ENCODE measurements at regions of chr15 and their contacts with region 1.

Region 1: GRCh38 chr15:41331833-41332787 is at the start of gene OIP5:
- DNase-seq: peak; percentile 99
- H3K4me3 Mint-ChIP-seq: peak within 1 kb of the TSS; percentile 95
- H3K27ac Mint-ChIP-seq: peak within 1 kb of the TSS; percentile 99
- H3K4me1 Mint-ChIP-seq: peaks cover 35% of the 10 kb centered on the region
- H3K27me3 Mint-ChIP-seq: no peaks in the 10 kb centered on the region
- total RNA-seq, gene OIP5: 15.2 to 15.4 TPM

Region 2: GRCh38 chr15:40952901-40953712 is 379.0 kb before region 1 on chr15 and contains the start of gene CHAC1:
- CTCF ChIA-PET with region 1: no interaction called
- POLR2A ChIA-PET with region 1: interaction called, 10 read pairs
- DNase-seq: peak; percentile 98
- H3K4me3 Mint-ChIP-seq: peak within 1 kb of the TSS; percentile 88
- H3K27ac Mint-ChIP-seq: peak within 1 kb of the TSS; percentile 87
- H3K4me1 Mint-ChIP-seq: peaks cover 46% of the 10 kb centered on the region
- H3K27me3 Mint-ChIP-seq: peaks cover 2% of the 10 kb centered on the region
- total RNA-seq, gene CHAC1: 20.3 to 22.0 TPM

Region 3: DNA sequence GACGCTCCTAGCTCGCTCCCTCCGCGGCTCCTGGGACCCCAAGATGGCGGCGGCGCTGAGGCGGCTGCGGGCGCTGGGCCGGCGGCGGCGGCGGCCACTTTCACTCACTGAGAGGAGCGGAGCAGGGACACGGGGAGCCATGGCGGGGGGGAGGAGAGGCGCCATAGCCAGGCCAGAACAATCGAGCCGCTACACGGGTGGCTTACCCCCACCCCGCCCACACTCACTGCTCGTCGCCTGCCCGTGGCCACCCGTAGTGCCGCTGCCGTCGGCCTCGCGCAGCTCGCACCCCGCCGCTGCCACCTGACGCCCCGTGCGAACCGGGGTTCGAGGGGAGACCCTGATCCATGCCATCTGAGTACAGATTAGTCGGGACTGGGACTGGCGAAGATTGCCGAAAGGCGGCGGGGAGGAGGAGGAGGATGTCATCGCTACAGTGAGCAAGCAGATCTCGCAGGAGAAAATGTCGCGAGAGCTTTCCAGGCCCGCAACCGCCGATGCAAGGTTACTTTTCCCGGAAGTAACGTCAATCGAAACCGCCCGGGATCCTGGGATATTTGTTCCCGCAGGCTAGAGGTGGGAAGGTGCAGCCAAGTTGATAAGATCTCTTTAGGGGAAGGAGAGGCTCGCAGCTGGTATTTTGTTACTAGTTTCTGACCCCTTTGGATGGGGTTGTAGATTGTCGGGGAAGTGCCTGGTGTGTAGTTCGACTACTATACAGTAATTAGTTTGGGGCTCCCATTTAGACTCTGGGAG is 215.8 kb before region 1 on chr15 and contains the start of gene INO80:
- CTCF ChIA-PET with region 1: interaction called, 5 read pairs
- POLR2A ChIA-PET with region 1: interaction called, 13 read pairs
- DNase-seq: peak; percentile 98
- H3K4me3 Mint-ChIP-seq: peak within 1 kb of the TSS; percentile 89
- H3K27ac Mint-ChIP-seq: peak within 1 kb of the TSS; percentile 96
- H3K4me1 Mint-ChIP-seq: peaks cover 34% of the 10 kb centered on the region
- H3K27me3 Mint-ChIP-seq: no peaks in the 10 kb centered on the region
- total RNA-seq, gene INO80: 21.8 to 22.1 TPM

Region 4: DNA sequence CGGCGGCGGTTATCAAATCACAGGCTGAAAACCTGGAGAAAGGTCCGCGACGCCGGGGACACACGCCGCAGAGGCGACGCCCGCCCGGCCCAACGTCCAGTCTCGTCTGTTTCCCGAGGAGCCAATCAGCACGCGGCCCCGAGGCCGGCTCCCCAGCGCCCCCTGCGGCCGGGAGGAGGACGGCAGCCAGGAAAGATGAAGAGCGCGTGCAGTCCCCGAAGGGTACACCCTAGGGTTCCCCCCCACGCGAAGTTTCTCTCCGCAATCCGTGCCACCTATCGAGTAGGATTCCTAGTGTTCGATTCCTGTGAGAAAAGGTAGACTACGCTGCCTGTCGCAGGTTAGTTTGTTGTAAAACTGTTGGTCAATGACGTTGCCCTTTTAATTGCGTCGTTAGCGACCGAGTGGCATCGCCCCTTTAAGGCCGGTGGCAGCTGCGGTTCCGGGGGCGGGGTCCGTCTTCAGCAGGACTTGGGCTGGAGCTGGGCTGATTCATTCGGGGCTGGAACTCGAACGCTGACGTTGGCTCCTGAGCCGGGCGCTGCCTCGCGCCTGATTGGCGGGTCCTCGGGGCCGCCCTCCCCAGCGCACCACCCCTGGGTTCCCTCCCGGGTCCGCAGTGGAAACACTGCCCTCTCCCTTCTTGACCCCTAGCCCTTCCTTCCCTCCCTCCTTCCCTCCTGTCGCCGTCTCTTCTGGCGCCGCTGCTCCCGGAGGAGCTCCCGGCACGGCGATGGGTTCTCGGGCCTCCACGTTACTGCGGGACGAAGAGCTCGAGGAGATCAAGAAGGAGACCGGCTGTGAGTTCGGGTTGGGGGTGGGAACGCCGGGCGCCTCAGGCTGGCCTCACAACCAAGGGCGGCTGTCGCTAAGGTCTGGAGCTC is 101.2 kb before region 1 on chr15 and contains the starts of genes CHP1 and EXD1:
- CTCF ChIA-PET with region 1: interaction called, 10 read pairs
- POLR2A ChIA-PET with region 1: interaction called, 27 read pairs
- DNase-seq: peak; percentile 97
- H3K4me3 Mint-ChIP-seq: peak within 1 kb of the TSS; percentile 84
- H3K27ac Mint-ChIP-seq: peak within 1 kb of the TSS; percentile 72
- H3K4me1 Mint-ChIP-seq: peaks cover 31% of the 10 kb centered on the region
- H3K27me3 Mint-ChIP-seq: peaks cover 5% of the 10 kb centered on the region
- total RNA-seq, gene CHP1: 60.1 to 68.9 TPM
- total RNA-seq, gene EXD1: not detected

Region 5: GRCh38 chr15:41283653-41284426 is 48.3 kb before region 1 on chr15:
- CTCF ChIA-PET with region 1: interaction called, 4 read pairs
- POLR2A ChIA-PET with region 1: interaction called, 56 read pairs
- DNase-seq: peak; percentile 98
- H3K4me3 Mint-ChIP-seq: peak overlapping the region; percentile 93
- H3K27ac Mint-ChIP-seq: peak overlapping the region; percentile 98
- H3K4me1 Mint-ChIP-seq: peaks cover 51% of the 10 kb centered on the region
- H3K27me3 Mint-ChIP-seq: no peaks in the 10 kb centered on the region

Region 6: GRCh38 chr15:41387646-41388045 is 55.5 kb after region 1 on chr15:
- CTCF ChIA-PET with region 1: no interaction called
- POLR2A ChIA-PET with region 1: no interaction called
- DNase-seq: no peak
- H3K4me3 Mint-ChIP-seq: no peak overlapping the region
- H3K27ac Mint-ChIP-seq: no peak overlapping the region
- H3K4me1 Mint-ChIP-seq: peaks cover 7% of the 10 kb centered on the region
- H3K27me3 Mint-ChIP-seq: no peaks in the 10 kb centered on the region

Region 7: DNA sequence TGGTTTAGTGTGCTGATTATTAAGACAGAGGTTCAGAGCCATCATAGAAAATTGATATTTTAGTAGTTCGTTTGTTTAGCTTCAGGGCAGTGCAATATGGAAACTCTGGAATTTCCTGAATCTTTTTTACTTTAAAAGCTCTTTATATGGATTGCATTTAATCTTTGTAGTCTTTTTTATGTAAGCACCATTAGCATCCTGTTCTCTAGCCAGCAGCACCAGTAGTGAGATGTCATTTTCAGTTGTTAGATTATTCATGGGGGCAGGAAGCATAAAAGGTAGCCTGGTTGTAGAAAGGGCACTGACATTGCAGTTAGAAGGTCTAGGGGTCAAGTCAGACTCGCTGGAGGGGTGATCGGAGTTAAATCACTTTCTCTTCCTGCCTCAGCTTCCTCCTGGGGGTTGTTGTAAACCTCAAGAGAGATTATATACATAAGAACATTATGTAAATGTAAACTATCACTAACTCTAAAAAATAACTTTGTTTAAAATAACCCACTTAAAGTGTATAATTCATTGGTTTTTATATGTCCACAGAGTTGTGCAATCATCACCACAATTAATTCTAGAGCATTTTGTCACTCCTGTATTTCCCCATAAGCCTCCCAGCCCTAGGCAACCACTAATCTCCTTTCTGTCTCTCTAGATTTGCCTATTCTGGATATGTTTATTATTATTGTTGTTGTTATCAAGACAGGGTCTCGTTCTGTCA is 130.1 kb after region 1 on chr15:
- CTCF ChIA-PET with region 1: no interaction called
- POLR2A ChIA-PET with region 1: no interaction called
- DNase-seq: no peak
- H3K4me3 Mint-ChIP-seq: no peak overlapping the region
- H3K27ac Mint-ChIP-seq: no peak overlapping the region
- H3K4me1 Mint-ChIP-seq: peaks cover 14% of the 10 kb centered on the region
- H3K27me3 Mint-ChIP-seq: no peaks in the 10 kb centered on the region